OCI-LY7 (cell line): ENCODE measurements at regions of chr15 and their contacts with region 1.

Region 1: DNA sequence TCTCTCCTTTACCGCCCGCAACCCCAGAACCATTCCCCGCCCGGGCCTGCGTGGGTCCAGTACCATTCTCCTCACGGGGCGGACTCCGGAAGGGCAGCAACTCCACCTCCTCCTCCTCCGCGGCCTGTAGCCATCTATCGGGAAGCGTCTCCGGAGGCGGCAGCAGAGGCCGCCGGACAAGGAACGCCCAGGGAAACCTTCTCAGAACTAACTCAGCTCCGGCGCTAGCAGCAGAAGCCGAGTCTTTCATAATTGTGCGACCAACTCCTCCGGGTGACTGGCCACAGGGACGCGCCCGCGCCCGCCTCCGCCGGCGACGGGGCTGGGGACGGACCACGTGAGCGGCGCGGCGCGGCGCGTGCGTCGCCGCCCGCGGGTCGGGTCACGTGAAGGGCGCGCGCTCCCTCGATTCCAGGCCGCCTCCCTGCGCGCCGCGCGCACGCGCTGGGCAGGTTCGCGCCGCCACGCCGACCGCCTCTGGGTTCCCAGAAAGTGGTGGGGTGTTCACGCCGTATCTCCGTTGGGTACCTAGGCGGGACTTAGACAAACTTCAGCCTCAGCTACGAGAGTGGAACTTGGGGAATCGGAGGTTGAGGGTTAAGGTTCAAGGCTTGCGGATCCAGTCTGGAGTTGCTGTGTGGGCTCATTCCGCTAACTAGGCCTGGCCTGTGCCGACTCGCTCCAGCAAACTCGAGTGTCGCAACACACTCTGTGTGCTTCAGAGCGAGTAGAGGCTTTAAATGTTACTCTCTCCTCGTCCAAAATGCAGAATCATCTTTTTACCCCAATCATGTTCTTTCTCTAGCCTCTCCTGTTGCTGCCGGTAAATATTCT is at the start of gene TRPM7:
- DNase-seq: peak; percentile 92
- H3K4me3 ChIP-seq: peak within 1 kb of the TSS; percentile 96
- H3K27ac ChIP-seq: peak within 1 kb of the TSS; percentile 76
- H3K4me1 ChIP-seq: peaks cover 22% of the 10 kb centered on the region
- CTCF ChIP-seq: no peak
- total RNA-seq, gene TRPM7: 49.3 and 50.0 TPM in 2 replicates

Region 2: GRCh38 chr15:50765195-50765973 is 78.7 kb after region 1 on chr15 and contains the start of gene SPPL2A:
- CTCF ChIA-PET with region 1: no interaction called
- POLR2A ChIA-PET with region 1: no interaction called
- intact Hi-C with region 1: loop called (anchors 2 kb)
- DNase-seq: peak; percentile 83
- H3K4me3 ChIP-seq: peak within 1 kb of the TSS; percentile 86
- H3K27ac ChIP-seq: peak within 1 kb of the TSS; percentile 57
- H3K4me1 ChIP-seq: peaks cover 16% of the 10 kb centered on the region
- CTCF ChIP-seq: no peak
- total RNA-seq, gene SPPL2A: 15.0 and 24.6 TPM in 2 replicates

Region 3: DNA sequence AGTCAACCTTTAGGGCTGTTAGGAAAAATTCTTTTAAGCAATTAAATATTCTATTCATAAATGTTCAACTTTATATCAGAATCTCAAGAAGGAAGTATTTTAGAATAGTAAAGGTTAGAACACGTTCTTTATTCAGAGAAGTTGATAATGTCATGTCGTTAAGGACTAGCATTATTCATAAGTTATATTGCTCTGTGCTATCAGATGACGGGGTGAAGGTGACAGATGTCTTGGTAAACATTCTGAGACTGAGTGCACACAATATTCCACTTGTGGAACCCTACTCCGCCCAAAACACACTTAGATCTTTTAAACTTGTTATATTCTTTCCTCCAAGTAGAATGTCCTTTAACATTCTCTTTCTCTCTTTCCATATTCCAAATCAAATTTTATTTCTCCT is 229.7 kb after region 1 on chr15:
- CTCF ChIA-PET with region 1: no interaction called
- POLR2A ChIA-PET with region 1: no interaction called
- intact Hi-C with region 1: no loop called
- DNase-seq: no peak
- H3K4me3 ChIP-seq: no peak overlapping the region
- H3K27ac ChIP-seq: no peak overlapping the region
- H3K4me1 ChIP-seq: no peaks in the 10 kb centered on the region
- CTCF ChIP-seq: no peak